ENCODE measurements at regions of chr5 and their contacts with region 1.

Region 1: DNA sequence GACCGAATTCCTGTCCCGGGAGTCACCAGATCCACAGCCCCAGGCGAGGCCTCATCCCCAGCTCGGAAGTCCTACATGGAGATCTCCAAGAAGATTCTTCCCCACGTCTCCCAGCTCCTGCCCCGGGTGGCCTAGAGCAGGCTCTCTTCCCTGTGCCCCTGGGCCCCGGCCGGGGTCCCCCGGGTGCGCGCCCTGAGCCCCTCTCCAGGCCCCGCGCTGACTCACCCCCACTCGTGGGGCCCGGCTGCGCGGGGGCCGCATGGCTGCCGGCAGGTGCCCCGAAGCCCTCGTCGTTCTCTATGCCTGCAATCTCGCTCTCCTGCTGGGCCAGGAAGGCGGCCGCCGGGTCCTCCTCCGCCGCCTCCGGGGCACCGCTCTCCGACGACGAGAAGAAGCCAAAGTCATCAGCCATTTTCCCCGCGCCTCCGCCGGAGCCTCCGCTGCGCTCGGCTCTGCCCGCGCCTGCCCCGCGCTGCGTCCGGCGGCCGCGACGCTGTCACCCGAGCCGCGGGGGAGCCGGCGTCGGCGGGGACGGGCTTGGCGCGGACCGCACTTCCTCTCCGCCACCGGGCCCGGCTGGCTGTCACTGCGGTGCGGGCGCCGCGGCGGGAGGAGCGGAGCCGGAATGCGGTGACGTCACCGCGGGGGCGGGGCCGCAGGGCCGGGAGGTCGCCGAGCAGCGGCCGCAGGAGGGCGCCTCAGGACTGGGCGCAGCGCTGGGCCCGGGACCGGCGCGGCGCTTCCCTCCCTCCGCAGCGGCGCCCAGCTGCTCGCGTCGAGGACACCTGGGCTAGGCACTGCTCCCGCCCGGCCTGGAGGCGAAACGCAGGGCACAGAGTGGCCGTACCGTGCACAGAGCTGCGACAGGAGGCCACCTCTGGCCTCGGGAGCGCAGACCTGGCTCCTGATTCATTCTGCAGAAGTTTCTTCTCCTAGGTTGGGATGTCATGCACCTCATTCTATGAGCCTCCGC is at the start of gene CLTB:
- DNase-seq: peak; percentile 96
- ATAC-seq: peak; percentile 96
- total RNA-seq, gene CLTB: 217 TPM

Region 2: DNA sequence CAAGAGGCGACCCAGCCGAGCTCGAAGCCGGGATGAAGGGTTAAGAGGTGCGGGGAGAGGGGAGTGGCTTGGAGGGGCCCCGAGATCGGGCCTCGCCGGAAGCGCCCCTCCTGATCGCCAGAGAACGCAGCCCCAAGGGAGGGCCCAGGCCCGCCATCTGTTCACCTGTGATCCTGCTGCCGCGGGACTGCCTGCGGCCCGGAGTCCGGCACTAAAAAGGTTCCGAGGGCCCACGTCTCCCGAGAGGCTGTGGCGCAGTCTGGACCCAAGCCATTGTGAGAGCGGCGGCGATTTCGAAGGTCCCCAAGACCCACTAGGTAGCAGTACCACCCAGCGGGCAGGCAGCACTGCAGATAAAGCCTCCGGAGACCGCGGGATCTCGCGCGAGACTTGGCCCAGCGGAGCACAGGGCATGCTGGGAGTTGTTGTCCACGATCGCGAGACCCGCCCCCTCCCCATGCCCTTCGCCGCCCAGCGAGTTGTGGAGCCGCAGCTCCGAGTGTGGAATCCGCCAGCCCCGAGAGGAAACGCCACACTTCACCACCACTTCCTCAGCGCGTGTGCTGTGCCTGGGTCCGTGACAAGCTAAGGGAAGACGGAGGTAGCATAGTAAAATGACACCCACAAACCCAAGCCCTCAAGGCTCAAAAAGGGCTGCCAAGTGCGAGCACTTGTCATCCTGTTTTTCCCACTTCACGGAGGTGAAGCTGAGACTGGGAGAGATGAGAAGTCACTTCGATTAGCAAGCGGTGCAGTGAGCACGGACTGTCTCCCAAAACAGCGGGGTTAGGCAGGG is 54.6 kb before region 1 on chr5 and contains the start of gene KIAA1191:
- intact Hi-C with region 1: loop called (anchors 2 kb)
- DNase-seq: peak; percentile 99
- ATAC-seq: peak; percentile 96
- total RNA-seq, gene KIAA1191: 76.0 TPM

Region 3: GRCh38 chr5:176388444-176389134 is 27.6 kb before region 1 on chr5 and contains the starts of genes HIGD2A and NOP16:
- intact Hi-C with region 1: loop called (anchors 2 kb)
- DNase-seq: peak; percentile 100
- ATAC-seq: peak; percentile 97
- total RNA-seq, gene HIGD2A: 218 TPM
- total RNA-seq, gene NOP16: 22.6 TPM

Region 4: DNA sequence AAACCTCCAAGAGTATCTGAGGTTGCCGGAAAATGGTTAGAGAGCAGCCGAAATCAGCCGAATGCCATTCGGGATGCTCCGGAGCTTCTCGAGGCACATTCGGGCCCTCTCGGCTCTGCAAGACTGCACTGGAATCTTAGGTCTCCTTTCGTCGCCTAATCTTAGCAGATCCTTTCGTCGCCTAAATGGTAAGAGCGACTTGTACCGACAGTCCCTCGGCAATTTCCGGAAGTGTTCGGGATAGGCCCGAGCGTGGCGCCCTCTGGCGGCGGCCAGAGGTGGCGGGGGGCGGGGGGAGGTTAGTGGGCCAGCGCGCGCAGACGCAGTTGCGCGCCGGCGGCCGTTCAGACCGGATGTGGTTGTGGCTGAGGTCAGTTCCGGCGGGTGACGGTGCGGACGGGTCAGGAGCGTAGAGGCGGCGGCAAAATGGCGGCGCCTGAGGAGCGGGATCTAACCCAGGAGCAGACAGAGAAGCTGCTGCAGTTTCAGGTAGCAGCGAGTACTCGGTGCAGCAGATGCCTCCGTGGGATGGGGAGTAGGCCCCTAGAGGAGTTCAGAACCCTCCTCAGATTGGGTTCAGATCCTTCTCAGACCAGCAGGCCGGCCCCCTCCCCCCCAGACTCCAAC is 31.9 kb after region 1 on chr5 and contains the start of gene FAF2:
- intact Hi-C with region 1: loop called (anchors 1 kb)
- DNase-seq: peak; percentile 98
- ATAC-seq: peak; percentile 99
- total RNA-seq, gene FAF2: 15.7 TPM

Region 5: GRCh38 chr5:176528301-176528700 is 112.1 kb after region 1 on chr5:
- intact Hi-C with region 1: no loop called
- DNase-seq: peak; percentile 72
- ATAC-seq: peak; percentile 63

Region 6: GRCh38 chr5:176543428-176544173 is 127.4 kb after region 1 on chr5:
- intact Hi-C with region 1: loop called (anchors 2 kb)
- DNase-seq: peak; percentile 92
- ATAC-seq: peak; percentile 93

Region 7: GRCh38 chr5:176647030-176647866 is 231.0 kb after region 1 on chr5 and contains the start of gene TSPAN17:
- intact Hi-C with region 1: loop called (anchors 2 kb)
- DNase-seq: peak; percentile 100
- ATAC-seq: peak; percentile 99
- total RNA-seq, gene TSPAN17: 30.0 TPM